Pancreas (tissue), 10 donors: ENCODE measurements at regions of chr18 and their contacts with region 1.

Region 1: GRCh38 chr18:8988261-8988871 is 114.1 kb upstream of the NDUFV2 start:
- DNase-seq: peak; percentile 48 to 72 (median 62)
- ATAC-seq: peak; percentile 69 to 89 (median 82)
- H3K4me3 ChIP-seq: no peak overlapping the region
- H3K27ac ChIP-seq: no peak overlapping the region
- H3K4me1 ChIP-seq: peaks cover 7 to 11% (median 11%) of the 10 kb centered on the region in 3 donors
- H3K27me3 ChIP-seq: no peaks in the 10 kb centered on the region
- CTCF ChIP-seq: peak; percentile 29 to 63 (median 54)

Region 2: DNA sequence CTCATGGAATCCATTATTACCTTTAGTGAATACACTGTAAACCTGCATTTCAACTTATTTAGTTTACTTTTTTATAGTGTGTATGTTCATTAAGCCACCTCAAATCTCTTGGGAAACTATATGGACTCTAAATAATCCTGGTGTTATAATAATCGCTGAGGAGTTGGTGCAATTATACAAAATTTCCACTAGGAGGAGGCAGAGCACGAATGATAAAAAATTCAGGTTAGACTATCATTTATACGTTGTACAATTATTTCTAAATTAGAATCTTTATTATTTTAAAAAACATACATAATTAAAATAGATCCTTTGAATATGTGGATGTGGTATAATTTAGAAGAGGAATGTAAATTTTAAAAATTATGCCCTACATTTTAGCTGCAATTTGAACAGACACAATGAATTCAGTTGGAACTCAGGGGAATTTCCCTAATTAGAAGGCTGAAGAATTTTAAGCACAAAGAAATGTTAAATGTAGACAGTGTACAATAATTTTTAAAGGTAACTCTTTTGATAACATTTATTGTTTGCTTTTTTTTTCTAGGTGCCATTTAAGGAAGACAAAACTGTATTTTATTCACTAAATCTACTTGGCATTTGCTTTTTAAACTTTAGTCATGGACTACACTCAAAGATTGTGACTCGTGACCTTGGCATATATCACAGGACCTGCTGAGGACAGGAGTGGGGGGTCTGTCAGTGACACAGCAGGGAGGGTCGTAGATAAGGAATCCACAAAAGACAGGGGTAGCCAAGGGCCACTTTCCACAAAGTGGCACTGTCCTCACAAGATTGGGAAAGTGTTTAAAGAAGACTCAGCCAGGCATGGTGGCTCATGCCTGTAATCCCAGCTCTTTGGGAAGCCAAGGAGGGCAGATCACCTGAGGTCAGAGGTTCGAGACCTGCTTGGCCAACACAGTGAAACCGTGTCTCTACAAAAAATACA is 333.6 kb before region 1 on chr18:
- intact Hi-C with region 1: loop called in 1 of 3 experiments (anchors 10 kb)
- DNase-seq: no peak
- ATAC-seq: peak in 3 of 4 donors; percentile 64 to 74 (median 72)
- H3K4me3 ChIP-seq: no peak overlapping the region
- H3K27ac ChIP-seq: no peak overlapping the region
- H3K4me1 ChIP-seq: no peaks in the 10 kb centered on the region
- H3K27me3 ChIP-seq: peaks cover 0 to 4% (median 0%) of the 10 kb centered on the region in 4 donors
- CTCF ChIP-seq: peak; percentile 43 to 69 (median 67)

Region 3: GRCh38 chr18:8695932-8696517 is 292.3 kb before region 1 on chr18:
- intact Hi-C with region 1: loop called in 2 of 3 experiments (anchors 2 to 5 kb)
- DNase-seq: no peak
- ATAC-seq: peak in 1 of 4 donors; percentile 35
- H3K4me3 ChIP-seq: no peak overlapping the region
- H3K27ac ChIP-seq: no peak overlapping the region
- H3K4me1 ChIP-seq: no peaks in the 10 kb centered on the region
- H3K27me3 ChIP-seq: no peaks in the 10 kb centered on the region
- CTCF ChIP-seq: no peak

Region 4: GRCh38 chr18:8930990-8931648 is 57.2 kb before region 1 on chr18:
- intact Hi-C with region 1: no loop called
- DNase-seq: no peak
- ATAC-seq: no peak
- H3K4me3 ChIP-seq: no peak overlapping the region
- H3K27ac ChIP-seq: no peak overlapping the region
- H3K4me1 ChIP-seq: no peaks in the 10 kb centered on the region
- H3K27me3 ChIP-seq: no peaks in the 10 kb centered on the region
- CTCF ChIP-seq: no peak